CD8-positive, alpha-beta T cell (primary cell): ENCODE measurements at regions of chr9 and their contacts with region 1.

Region 1: GRCh38 chr9:120842690-120843499 is at the start of gene PSMD5:
- DNase-seq: peak; percentile 88 to 99 (median 95)
- ATAC-seq: peak; percentile 88
- H3K4me3 ChIP-seq: peak within 1 kb of the TSS; percentile 92 to 97
- H3K4me3 Mint-ChIP-seq: peak within 1 kb of the TSS; percentile 94
- H3K27ac ChIP-seq: peak within 1 kb of the TSS; percentile 94 to 98
- H3K27ac Mint-ChIP-seq: peak within 1 kb of the TSS; percentile 98
- H3K4me1 ChIP-seq: peaks cover 65% of the 10 kb centered on the region
- H3K4me1 Mint-ChIP-seq: peaks cover 78% of the 10 kb centered on the region
- H3K27me3 ChIP-seq: no peaks in the 10 kb centered on the region
- H3K27me3 Mint-ChIP-seq: no peaks in the 10 kb centered on the region
- CTCF ChIP-seq: no peak
- total RNA-seq, gene PSMD5: 38.5 to 58.2 TPM

Region 2: DNA sequence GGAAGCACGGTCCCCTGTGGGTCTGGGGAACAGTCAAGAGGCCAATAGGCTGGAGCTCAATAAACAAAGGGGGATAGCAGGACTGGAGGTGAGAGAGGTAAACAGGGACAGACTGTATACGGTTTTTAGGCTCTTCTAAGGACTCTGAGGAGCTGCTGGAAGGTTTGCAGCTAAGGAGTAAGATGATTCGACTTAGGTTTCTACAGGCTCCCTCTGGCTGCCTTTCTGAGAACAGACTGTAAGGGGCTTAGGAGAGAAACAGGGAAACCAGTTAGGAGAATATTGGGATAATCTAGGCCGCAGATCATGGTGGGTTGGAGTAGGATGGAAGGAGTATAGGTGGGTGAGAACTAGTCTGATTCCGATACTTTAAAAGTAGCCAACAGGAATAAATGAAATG is 273.3 kb before region 1 on chr9:
- CTCF ChIA-PET with region 1: no interaction called
- POLR2A ChIA-PET with region 1: no interaction called
- intact Hi-C with region 1: no loop called
- DNase-seq: no peak
- ATAC-seq: no peak
- H3K4me3 ChIP-seq: no peak overlapping the region
- H3K4me3 Mint-ChIP-seq: no peak overlapping the region
- H3K27ac ChIP-seq: no peak overlapping the region
- H3K27ac Mint-ChIP-seq: no peak overlapping the region
- H3K4me1 ChIP-seq: no peaks in the 10 kb centered on the region
- H3K4me1 Mint-ChIP-seq: peaks cover 16% of the 10 kb centered on the region
- H3K27me3 ChIP-seq: no peaks in the 10 kb centered on the region
- H3K27me3 Mint-ChIP-seq: no peaks in the 10 kb centered on the region
- CTCF ChIP-seq: no peak

Region 3: GRCh38 chr9:120579750-120580590 is 262.9 kb before region 1 on chr9 and contains the start of gene CDK5RAP2:
- CTCF ChIA-PET with region 1: no interaction called
- POLR2A ChIA-PET with region 1: no interaction called
- intact Hi-C with region 1: loop called in 1 of 2 experiments (anchors 1 kb)
- DNase-seq: peak; percentile 83 to 98 (median 91)
- ATAC-seq: peak; percentile 98
- H3K4me3 ChIP-seq: peak within 1 kb of the TSS; percentile 63 to 86
- H3K4me3 Mint-ChIP-seq: peak within 1 kb of the TSS; percentile 92
- H3K27ac ChIP-seq: peak within 1 kb of the TSS; percentile 68 to 77
- H3K27ac Mint-ChIP-seq: peak within 1 kb of the TSS; percentile 95
- H3K4me1 ChIP-seq: peaks cover 25% of the 10 kb centered on the region
- H3K4me1 Mint-ChIP-seq: peaks cover 56% of the 10 kb centered on the region
- H3K27me3 ChIP-seq: no peaks in the 10 kb centered on the region
- H3K27me3 Mint-ChIP-seq: no peaks in the 10 kb centered on the region
- CTCF ChIP-seq: no peak
- total RNA-seq, gene CDK5RAP2: 52.1 to 55.2 TPM

Region 4: DNA sequence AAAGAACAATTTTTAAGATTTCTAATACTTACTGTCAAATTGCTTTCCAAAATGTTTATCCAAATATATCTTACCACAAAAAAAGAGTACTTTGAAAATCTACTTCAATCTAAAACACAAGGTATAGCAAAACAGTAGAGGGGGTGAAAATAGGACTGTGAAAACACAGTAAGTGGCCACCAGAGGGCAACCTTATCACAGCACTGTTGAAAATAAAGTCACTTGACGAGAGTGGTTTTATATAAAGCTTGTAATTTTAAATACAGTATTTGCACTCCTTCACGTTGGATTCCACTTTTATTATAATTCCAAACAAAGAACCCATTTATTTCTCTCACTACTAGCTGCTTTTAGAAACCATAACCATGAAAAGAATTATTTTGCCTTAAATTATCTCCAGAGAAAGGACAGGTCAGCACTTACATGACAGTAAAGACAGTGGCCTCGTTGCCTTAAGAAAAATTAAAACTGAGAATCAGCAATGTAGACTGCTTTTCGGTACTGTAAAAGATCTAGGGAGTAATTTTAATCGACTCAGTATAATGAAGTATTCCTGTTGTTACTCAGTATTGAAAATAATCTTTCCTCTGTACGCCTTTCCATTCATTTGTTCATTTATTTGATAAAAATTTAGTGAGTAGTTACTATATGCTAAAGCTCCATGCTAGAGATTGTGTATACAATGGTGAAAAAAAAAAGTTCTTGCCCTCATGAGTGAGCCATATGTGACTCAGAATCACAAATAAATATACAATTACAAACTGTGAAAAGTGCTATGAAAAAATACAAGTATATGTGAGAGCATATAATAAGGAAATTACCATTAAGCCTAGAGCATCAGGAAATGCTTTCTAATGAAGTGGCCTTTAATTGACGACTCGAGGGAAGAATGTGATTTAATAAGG is 222.9 kb before region 1 on chr9:
- CTCF ChIA-PET with region 1: no interaction called
- POLR2A ChIA-PET with region 1: no interaction called
- intact Hi-C with region 1: no loop called
- DNase-seq: peak; percentile 8 to 76 (median 59)
- ATAC-seq: peak; percentile 65
- H3K4me3 ChIP-seq: no peak overlapping the region
- H3K4me3 Mint-ChIP-seq: no peak overlapping the region
- H3K27ac ChIP-seq: no peak overlapping the region
- H3K27ac Mint-ChIP-seq: no peak overlapping the region
- H3K4me1 ChIP-seq: no peaks in the 10 kb centered on the region
- H3K4me1 Mint-ChIP-seq: no peaks in the 10 kb centered on the region
- H3K27me3 ChIP-seq: no peaks in the 10 kb centered on the region
- H3K27me3 Mint-ChIP-seq: no peaks in the 10 kb centered on the region
- CTCF ChIP-seq: peak; percentile 98

Region 5: GRCh38 chr9:120792898-120793765 is 49.8 kb before region 1 on chr9 and contains the start of gene FBXW2:
- CTCF ChIA-PET with region 1: no interaction called
- POLR2A ChIA-PET with region 1: interaction called, 14 read pairs
- intact Hi-C with region 1: loop called (anchors 1 kb)
- DNase-seq: peak; percentile 50 to 93 (median 84)
- ATAC-seq: peak; percentile 81
- H3K4me3 ChIP-seq: peak within 1 kb of the TSS; percentile 60 to 88
- H3K4me3 Mint-ChIP-seq: peak within 1 kb of the TSS; percentile 85
- H3K27ac ChIP-seq: peak within 1 kb of the TSS; percentile 88 to 90
- H3K27ac Mint-ChIP-seq: peak within 1 kb of the TSS; percentile 87
- H3K4me1 ChIP-seq: peaks cover 26% of the 10 kb centered on the region
- H3K4me1 Mint-ChIP-seq: peaks cover 60% of the 10 kb centered on the region
- H3K27me3 ChIP-seq: no peaks in the 10 kb centered on the region
- H3K27me3 Mint-ChIP-seq: no peaks in the 10 kb centered on the region
- CTCF ChIP-seq: no peak
- total RNA-seq, gene FBXW2: 51.9 to 54.7 TPM

Region 6: DNA sequence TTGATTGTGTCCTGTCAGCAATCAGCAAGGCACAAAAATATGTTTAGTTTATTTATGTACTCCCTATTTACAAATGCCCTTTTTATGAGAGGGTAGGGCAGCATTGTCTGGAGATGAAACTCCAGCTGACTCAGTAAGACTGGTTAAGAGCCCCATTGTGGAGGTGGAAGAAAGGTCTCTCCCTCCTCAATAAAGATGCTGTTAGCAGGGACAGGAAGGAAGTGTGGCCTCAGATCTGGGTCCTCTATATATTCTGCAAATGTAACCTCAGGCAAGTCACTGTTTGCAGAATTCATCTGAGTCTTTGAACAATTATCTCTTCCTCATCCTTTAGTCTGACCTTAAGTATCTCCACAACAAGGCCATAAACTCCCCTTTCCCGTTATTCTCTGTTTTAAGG is 132.0 kb after region 1 on chr9:
- CTCF ChIA-PET with region 1: no interaction called
- POLR2A ChIA-PET with region 1: no interaction called
- intact Hi-C with region 1: no loop called
- DNase-seq: peak in 2 of 9 experiments; percentile 5 to 20
- ATAC-seq: no peak
- H3K4me3 ChIP-seq: no peak overlapping the region
- H3K4me3 Mint-ChIP-seq: no peak overlapping the region
- H3K27ac ChIP-seq: peak overlapping the region in 1 of 2 experiments; percentile 30
- H3K27ac Mint-ChIP-seq: peak overlapping the region; percentile 82
- H3K4me1 ChIP-seq: peaks cover 16% of the 10 kb centered on the region
- H3K4me1 Mint-ChIP-seq: peaks cover 17% of the 10 kb centered on the region
- H3K27me3 ChIP-seq: no peaks in the 10 kb centered on the region
- H3K27me3 Mint-ChIP-seq: no peaks in the 10 kb centered on the region
- CTCF ChIP-seq: no peak

Region 7: DNA sequence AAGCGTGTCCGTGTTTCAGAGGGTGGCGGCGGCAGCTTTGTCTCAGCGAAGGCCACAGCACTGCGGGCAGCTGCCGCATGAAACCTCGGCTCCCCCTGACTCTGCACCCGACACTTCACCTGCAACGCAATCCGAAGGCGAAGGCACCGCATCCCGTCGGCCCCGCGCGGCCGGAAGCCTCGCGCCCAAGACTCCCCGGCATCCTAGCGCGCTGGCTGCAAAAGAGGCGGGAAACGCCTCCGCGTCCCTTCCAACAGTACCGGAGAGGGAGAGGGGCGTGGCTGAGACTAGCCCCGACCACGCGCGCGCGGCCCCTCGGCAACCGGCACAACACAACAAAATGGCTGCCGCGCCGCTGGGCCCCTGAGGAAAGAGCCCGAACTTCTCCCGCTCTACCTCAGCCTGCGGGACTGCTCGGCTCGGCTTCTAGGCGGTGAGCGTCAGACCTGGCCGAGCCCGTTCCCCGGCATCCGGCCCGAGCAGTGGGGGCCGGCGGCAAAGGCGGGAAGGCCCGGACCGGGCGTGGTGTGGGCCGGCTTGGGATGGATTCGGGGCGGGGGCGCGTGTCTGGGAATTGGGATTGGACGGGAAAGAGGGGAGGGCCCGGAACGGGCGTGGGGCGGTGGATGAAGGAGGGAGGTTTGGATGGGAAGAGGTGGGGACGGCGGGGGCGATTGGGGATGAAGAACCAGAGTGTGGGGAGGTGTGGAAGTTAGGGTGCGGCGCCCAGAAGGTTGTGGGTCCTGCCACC is 231.9 kb after region 1 on chr9 and contains the start of gene CNTRL:
- CTCF ChIA-PET with region 1: interaction called, 3 read pairs
- POLR2A ChIA-PET with region 1: interaction called, 4 read pairs
- intact Hi-C with region 1: loop called (anchors 2 to 5 kb)
- DNase-seq: peak; percentile 62 to 91 (median 85)
- ATAC-seq: peak; percentile 83
- H3K4me3 ChIP-seq: peak within 1 kb of the TSS; percentile 78 to 80
- H3K4me3 Mint-ChIP-seq: peak within 1 kb of the TSS; percentile 98
- H3K27ac ChIP-seq: peak within 1 kb of the TSS; percentile 77 to 80
- H3K27ac Mint-ChIP-seq: peak within 1 kb of the TSS; percentile 95
- H3K4me1 ChIP-seq: peaks cover 19% of the 10 kb centered on the region
- H3K4me1 Mint-ChIP-seq: peaks cover 43% of the 10 kb centered on the region
- H3K27me3 ChIP-seq: no peaks in the 10 kb centered on the region
- H3K27me3 Mint-ChIP-seq: no peaks in the 10 kb centered on the region
- CTCF ChIP-seq: no peak
- total RNA-seq, gene CNTRL: 29.8 to 30.8 TPM

Region 8: DNA sequence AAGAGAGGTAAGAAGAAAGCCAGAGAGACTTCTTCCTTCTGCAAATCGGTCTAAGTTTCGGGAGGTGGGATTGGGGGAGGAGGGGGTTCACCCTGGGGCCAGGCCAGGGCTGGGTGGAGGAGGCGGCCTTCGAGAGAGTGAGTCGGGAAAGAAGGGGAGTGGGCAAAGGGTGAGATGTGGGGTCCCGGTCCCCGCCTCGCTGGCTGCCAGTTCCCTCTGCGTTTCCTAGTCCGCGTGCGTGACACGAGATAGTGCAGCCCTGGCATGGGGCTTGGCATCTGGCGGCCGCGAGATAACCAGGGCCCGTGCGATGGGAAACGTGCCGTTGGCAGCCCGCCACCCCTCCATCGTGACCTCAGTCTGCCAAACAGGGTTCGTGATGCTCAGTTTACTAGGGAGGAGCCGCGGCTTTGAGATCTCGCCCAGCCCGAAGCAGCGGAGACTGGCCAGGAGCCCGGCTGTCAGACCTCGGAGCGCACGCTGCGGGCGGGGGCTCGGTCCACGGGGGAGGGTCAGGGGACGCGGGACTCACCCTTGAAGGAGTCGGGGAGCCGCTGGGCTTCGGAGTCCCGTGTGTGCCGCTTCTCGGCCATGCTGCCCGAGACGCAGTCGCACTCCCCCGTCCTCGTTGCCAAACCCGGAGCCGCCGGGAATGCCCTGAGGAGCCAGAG is 526.8 kb after region 1 on chr9 and contains the start of gene STOM:
- CTCF ChIA-PET with region 1: no interaction called
- POLR2A ChIA-PET with region 1: no interaction called
- intact Hi-C with region 1: loop called in 1 of 2 experiments (anchors 5 kb)
- DNase-seq: peak in 8 of 9 experiments; percentile 35 to 87 (median 68)
- ATAC-seq: peak; percentile 53
- H3K4me3 ChIP-seq: peak within 1 kb of the TSS; percentile 86 to 96
- H3K4me3 Mint-ChIP-seq: peak within 1 kb of the TSS; percentile 92
- H3K27ac ChIP-seq: peak within 1 kb of the TSS; percentile 67 to 90
- H3K27ac Mint-ChIP-seq: peak within 1 kb of the TSS; percentile 90
- H3K4me1 ChIP-seq: peaks cover 11% of the 10 kb centered on the region
- H3K4me1 Mint-ChIP-seq: peaks cover 66% of the 10 kb centered on the region
- H3K27me3 ChIP-seq: no peaks in the 10 kb centered on the region
- H3K27me3 Mint-ChIP-seq: no peaks in the 10 kb centered on the region
- CTCF ChIP-seq: no peak
- total RNA-seq, gene STOM: 47.4 to 48.2 TPM